Breast epithelium (tissue), 4 donors: ENCODE measurements at regions of chr11 and their contacts with region 1.

Region 1: GRCh38 chr11:60838132-60838531 is 3.8 kb upstream of the CCDC86 start:
- DNase-seq: no peak
- H3K4me3 ChIP-seq: no peak overlapping the region
- H3K27ac ChIP-seq: no peak overlapping the region
- H3K4me1 ChIP-seq: peaks cover 6 to 19% of the 10 kb centered on the region in 2 donors
- H3K27me3 ChIP-seq: no peaks in the 10 kb centered on the region
- CTCF ChIP-seq: no peak
- POLR2A ChIP-seq: no peak

Region 2: GRCh38 chr11:61158616-61159381 is 320.7 kb after region 1 on chr11:
- intact Hi-C with region 1: loop called (anchors 5 kb)
- DNase-seq: no peak
- H3K4me3 ChIP-seq: peak overlapping the region in 1 of 3 donors; percentile 20
- H3K27ac ChIP-seq: peak overlapping the region; percentile 62 to 88
- H3K4me1 ChIP-seq: peaks cover 0 to 18% of the 10 kb centered on the region in 2 donors
- H3K27me3 ChIP-seq: no peaks in the 10 kb centered on the region
- CTCF ChIP-seq: no peak
- POLR2A ChIP-seq: no peak

Region 3: DNA sequence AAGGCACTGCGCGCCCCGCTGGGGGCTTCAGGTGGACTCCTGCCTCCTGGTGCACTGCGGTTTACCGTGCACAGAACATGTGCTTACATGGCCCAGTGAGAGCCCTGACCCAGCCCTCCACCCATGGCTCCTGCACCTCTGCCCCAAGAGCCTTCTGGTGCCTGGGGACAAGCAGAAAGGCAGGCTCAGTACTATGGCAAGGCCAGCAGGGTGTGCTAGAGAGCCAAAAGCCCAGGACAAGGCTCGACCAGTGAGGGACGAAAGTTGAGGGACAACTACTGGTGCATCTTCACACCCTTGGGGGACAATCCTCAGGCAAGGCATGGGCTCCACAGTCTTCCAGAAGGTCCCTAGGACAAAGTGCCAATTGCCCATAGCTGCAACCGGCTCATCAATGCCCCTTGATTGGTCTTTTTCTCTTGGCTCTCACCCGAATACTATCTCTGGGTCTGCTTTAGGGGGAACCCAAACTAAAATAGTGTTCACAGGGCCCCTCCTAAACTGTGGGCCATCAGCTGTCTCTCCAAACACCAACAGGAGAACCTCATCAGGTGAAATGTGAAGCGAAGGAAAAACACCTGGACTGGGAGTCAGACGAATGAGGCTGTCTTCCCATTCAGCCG is 416.4 kb after region 1 on chr11:
- intact Hi-C with region 1: no loop called
- DNase-seq: peak in 1 of 2 donors; percentile 61
- H3K4me3 ChIP-seq: no peak overlapping the region
- H3K27ac ChIP-seq: no peak overlapping the region
- H3K4me1 ChIP-seq: no peaks in the 10 kb centered on the region
- H3K27me3 ChIP-seq: no peaks in the 10 kb centered on the region
- CTCF ChIP-seq: peak in 2 of 3 donors; percentile 61 to 63
- POLR2A ChIP-seq: no peak